ENCODE measurements at regions of chr9 and their contacts with region 1.

Region 1: DNA sequence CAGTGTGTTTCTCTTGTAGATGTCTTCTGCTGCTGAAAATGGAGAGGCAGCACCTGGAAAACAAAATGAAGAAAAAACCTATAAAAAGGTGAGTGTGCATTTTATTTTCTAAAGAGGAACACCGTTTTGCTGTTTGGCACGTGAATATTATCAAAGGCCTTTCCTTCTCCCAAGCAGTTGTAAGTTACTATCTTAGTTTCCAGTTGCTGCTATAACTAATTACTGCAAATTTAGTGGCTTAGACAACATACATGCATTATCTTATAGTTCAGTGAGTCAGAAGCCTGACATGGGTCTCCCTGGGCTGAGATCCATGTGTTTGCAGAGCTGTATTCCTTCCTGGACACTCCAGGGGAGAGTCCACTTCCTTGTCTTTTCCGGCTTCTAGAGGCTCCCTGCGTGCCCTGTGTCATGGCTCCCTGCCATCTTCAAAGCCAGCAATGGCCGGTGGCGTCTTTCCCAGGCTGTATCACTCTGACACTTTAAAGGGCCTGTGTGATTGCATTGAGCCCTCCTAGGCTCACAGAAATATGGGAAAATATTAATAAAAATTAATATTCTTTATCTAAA is 117.6 kb downstream of the PIP5K1B start:
- DNase-seq: no peak
- H3K4me3 ChIP-seq: no peak overlapping the region
- H3K27ac ChIP-seq: no peak overlapping the region
- H3K4me1 ChIP-seq: no peaks in the 10 kb centered on the region
- CTCF ChIP-seq: no peak

Region 2: GRCh38 chr9:68887232-68887631 is 64.6 kb after region 1 on chr9:
- CTCF ChIA-PET with region 1: no interaction called
- POLR2A ChIA-PET with region 1: no interaction called
- intact Hi-C with region 1: loop called (anchors 10 kb)
- DNase-seq: no peak
- H3K4me3 ChIP-seq: no peak overlapping the region
- H3K27ac ChIP-seq: no peak overlapping the region
- H3K4me1 ChIP-seq: no peaks in the 10 kb centered on the region
- CTCF ChIP-seq: no peak

Region 3: DNA sequence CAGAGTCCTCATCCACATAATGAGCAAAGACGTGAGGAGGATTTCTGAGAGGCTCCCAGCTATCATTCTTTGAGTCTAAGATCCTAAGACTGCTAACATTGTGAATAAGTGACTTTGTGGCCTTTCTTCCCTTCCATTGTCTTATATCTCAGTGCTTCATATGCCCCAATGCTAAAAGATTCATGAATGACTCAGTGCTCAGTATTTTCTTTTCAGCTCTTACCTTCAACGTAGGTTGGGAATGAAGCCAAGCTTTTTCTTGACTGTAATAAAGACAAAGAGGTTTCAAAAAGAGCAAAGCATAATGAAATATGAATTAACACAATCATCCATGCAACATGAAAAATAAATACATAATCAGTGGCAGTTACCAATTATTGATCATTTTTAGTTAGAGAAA is 648.8 kb after region 1 on chr9:
- CTCF ChIA-PET with region 1: no interaction called
- POLR2A ChIA-PET with region 1: no interaction called
- intact Hi-C with region 1: no loop called
- DNase-seq: no peak
- H3K4me3 ChIP-seq: no peak overlapping the region
- H3K27ac ChIP-seq: no peak overlapping the region
- H3K4me1 ChIP-seq: no peaks in the 10 kb centered on the region
- CTCF ChIP-seq: no peak

Measured in OCI-LY7 (cell line).